ENCODE measurements at regions of chr5 and their contacts with region 1.

Region 1: DNA sequence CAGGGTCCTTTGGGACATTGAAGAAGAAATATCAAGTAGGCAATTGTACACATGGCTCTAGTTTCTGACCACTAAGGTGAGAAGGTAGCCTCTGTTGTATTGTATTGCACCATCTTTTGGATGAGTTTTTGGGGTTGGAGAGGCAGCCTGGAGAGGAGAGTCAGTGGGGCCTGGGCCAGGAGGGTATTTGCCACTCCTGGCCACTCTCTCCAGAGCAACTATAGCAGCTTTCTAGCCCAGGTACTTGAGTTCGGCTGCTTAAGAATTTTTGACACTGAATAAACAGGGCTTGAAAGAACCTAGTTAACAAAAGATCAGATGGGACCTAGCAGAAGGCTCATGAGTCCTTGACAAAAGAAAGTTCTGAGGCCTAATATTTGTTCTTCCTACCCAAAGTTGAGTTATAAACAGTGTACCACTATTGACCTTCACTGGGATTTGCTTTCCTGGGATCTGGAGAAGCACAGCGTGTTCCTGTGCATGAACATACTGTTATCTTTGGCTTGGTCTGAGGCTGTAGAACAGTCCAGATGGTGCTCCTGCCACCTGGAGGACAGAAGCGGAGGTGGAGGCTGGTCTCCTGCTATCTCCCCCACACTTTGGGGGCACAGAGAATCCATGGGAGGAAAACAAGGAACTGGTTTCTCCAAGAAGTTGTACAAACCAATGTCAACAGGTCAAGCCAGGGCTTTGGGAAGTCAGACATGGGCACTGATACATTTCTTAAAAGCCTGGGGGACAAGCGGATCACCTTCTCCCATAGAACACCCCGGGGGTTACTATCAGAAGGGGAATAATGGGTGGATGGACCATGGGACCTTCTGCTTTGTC is 110.4 kb upstream of the LIFR start:
- DNase-seq: peak; percentile 66 to 71
- H3K4me3 ChIP-seq: no peak overlapping the region
- H3K27ac ChIP-seq: peak overlapping the region; percentile 39 to 65 (median 60)
- H3K4me1 ChIP-seq: peaks cover 33 to 41% of the 10 kb centered on the region in 2 donors
- H3K27me3 ChIP-seq: no peaks in the 10 kb centered on the region
- CTCF ChIP-seq: peak; percentile 39 to 90 (median 77)
- POLR2A ChIP-seq: no peak

Region 2: GRCh38 chr5:38441453-38442246 is 225.2 kb before region 1 on chr5:
- intact Hi-C with region 1: loop called (anchors 2 kb)
- DNase-seq: peak; percentile 92 to 93
- H3K4me3 ChIP-seq: no peak overlapping the region
- H3K27ac ChIP-seq: no peak overlapping the region
- H3K4me1 ChIP-seq: peaks cover 0 to 9% of the 10 kb centered on the region in 2 donors
- H3K27me3 ChIP-seq: no peaks in the 10 kb centered on the region
- CTCF ChIP-seq: peak; percentile 88 to 98 (median 94)
- POLR2A ChIP-seq: no peak

Region 3: GRCh38 chr5:38556599-38557305 is 110.1 kb before region 1 on chr5 and contains the start of gene LIFR:
- intact Hi-C with region 1: loop called (anchors 10 kb)
- DNase-seq: peak; percentile 88 to 89
- H3K4me3 ChIP-seq: peak within 1 kb of the TSS; percentile 51 to 79 (median 58)
- H3K27ac ChIP-seq: peak within 1 kb of the TSS; percentile 93 to 100 (median 99)
- H3K4me1 ChIP-seq: peaks cover 39 to 54% of the 10 kb centered on the region in 2 donors
- H3K27me3 ChIP-seq: no peaks in the 10 kb centered on the region
- CTCF ChIP-seq: peak in 1 of 6 experiments; percentile 13
- POLR2A ChIP-seq: peak; percentile 40 to 93
- total RNA-seq, gene LIFR: 172 to 446 (median 233) TPM

Region 4: DNA sequence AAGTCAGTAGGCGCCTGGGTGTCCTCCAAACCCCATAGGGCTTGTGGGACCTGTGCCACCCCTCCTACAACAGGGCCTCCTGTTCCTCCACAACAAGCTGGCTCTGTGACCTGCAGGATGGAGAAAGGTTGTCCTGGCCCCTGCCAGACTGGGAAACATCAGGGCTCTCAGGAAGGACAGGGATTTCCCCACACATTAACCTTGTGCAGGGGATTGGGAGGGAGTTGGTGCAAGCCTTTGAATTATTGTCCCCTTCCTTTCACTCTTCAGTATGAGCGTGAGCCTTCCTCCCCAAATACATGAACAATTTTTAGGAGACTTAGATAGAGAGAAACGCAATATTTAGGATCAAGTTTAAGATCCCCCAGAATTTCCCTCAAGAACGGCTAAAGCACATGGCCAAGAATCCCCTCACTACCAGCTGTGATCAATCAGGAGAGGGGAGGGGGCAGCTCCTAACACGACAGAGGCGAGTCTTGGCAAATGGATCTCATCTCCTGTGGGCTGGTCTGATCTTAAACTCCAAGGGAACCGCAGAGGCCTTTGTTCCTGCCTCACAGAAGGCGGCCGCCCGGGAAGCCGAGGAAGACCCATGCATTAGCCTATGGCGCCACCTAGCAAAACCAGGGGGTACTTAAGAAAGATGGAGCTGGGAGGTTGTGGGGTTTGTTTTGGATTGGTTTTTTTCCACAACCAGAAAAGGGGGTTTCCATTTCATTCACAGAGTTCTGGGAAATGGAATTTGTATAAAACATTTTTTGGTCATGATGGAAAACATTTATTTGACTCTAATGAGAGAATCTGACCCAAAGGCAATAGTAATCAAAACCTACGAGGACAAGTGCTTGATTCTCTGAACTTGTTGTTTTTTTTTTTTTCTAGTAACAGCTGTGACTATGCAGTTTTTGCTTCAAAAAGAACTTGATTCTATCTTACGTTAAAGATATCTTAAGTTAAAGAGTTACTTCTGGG is 142.8 kb after region 1 on chr5:
- intact Hi-C with region 1: loop called (anchors 10 kb)
- DNase-seq: peak; percentile 80 to 86
- H3K4me3 ChIP-seq: no peak overlapping the region
- H3K27ac ChIP-seq: no peak overlapping the region
- H3K4me1 ChIP-seq: peaks cover 3 to 8% of the 10 kb centered on the region in 2 donors
- H3K27me3 ChIP-seq: no peaks in the 10 kb centered on the region
- CTCF ChIP-seq: peak; percentile 71 to 92 (median 83)
- POLR2A ChIP-seq: no peak

Measured in thyroid gland (tissue), 4 donors.